ENCODE measurements at regions of chr1 and their contacts with region 1.

Region 1: GRCh38 chr1:180502360-180503273 is at the start of gene ACBD6:
- DNase-seq: peak; percentile 90
- total RNA-seq, gene ACBD6: 44.2 and 48.8 TPM in 2 replicates

Region 2: DNA sequence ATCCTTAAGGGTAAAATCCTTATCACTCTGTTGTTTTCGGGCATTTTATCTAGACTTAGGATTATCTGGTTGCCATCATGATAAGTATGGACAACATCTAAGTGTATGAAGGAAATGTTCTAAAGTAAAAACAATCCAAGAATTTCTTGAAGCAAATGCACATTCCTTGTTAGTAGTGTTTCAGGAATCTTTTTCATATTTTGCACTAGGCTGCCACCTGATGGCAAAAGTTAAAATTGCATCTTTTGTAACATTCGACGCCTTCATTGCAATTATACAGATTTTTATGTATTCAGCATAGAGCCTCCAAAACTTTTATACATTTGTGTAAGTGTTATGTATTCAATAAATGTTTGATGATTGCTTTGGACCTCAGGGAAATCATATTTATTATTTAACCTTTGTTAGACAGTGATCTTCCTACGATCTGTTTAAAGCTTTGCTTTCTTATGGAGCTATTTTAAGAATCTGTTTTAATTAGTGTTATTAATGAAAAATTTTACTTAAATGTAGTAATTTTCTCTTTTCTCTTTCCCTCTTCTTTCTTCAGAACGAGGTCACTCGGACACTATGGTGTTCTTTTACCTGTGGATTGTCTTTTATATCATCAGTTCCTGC is 360.6 kb after region 1 on chr1:
- in situ Hi-C with region 1: loop called (anchors 25 kb)
- DNase-seq: peak; percentile 46

Region 3: DNA sequence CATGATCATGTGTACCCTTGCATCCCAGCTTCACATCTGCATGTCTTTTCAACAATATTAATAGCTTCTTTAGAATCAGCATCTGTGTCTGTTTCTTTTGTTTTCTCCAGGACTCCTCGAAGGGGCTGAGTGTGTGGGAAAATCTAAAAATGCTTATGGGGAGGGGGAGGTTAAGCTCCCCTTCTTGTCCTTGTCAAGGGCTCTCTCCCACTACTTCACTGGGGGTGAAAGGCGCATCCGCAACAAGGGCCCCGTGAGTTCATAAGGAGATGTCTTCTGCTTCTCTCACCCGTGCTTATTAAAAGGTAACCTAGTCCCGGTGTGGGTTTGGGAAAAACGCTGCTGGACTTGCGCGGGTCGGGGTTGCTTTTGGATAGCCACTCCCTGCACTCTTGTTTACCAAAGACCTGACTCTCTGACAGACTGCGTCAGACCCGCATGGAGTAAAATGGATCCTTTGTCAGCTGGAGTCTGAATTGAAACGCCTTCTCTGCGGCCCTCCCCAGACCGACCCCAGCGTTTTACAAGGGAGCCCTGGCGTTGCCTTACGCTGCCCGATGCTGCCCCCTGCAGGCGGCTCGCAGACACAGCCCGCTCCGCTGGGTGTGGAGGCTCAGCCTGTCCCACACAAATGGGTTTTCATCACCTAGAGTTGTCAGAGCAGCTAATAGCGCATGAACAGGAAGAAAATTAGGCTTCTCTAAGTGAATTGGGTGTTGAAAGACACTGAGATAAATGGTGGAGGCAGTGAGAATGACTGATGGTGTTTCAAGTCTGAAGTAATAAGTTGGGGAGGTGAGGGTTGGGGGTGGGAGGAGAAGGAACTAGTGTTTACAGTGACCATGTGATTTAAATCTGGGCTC is 639.7 kb after region 1 on chr1:
- in situ Hi-C with region 1: loop called (anchors 10 kb)
- DNase-seq: peak; percentile 62

Measured in Caki2 (cell line).